Endothelial cell of umbilical vein (primary cell): ENCODE measurements at regions of chr17 and their contacts with region 1.

Region 1: GRCh38 chr17:64326395-64327054 is 63.5 kb upstream of the TEX2 start:
- DNase-seq: peak; percentile 77
- H3K4me3 ChIP-seq: no peak overlapping the region
- H3K27ac ChIP-seq: peak overlapping the region; percentile 95
- H3K4me1 ChIP-seq: peaks cover 57% of the 10 kb centered on the region
- H3K27me3 ChIP-seq: no peaks in the 10 kb centered on the region
- CTCF ChIP-seq: no peak
- POLR2A ChIP-seq: peak; percentile 45

Region 2: GRCh38 chr17:64145757-64146417 is 180.6 kb before region 1 on chr17:
- CTCF ChIA-PET with region 1: interaction called, 3 read pairs
- POLR2A ChIA-PET with region 1: interaction called, 12 read pairs
- dilution Hi-C with region 1: no loop called
- intact Hi-C with region 1: no loop called
- DNase-seq: peak; percentile 99
- H3K4me3 ChIP-seq: peak overlapping the region; percentile 31 to 72 (median 64)
- H3K27ac ChIP-seq: peak overlapping the region; percentile 63
- H3K4me1 ChIP-seq: peaks cover 21% of the 10 kb centered on the region
- H3K27me3 ChIP-seq: no peaks in the 10 kb centered on the region
- CTCF ChIP-seq: no peak
- POLR2A ChIP-seq: peak; percentile 100

Region 3: GRCh38 chr17:64343853-64344637 is 17.5 kb after region 1 on chr17:
- CTCF ChIA-PET with region 1: interaction called, 32 read pairs
- POLR2A ChIA-PET with region 1: interaction called, 6 read pairs
- dilution Hi-C with region 1: no loop called
- intact Hi-C with region 1: loop called (anchors 1 kb)
- DNase-seq: peak; percentile 99
- H3K4me3 ChIP-seq: no peak overlapping the region
- H3K27ac ChIP-seq: peak overlapping the region; percentile 89
- H3K4me1 ChIP-seq: peaks cover 41% of the 10 kb centered on the region
- H3K27me3 ChIP-seq: no peaks in the 10 kb centered on the region
- CTCF ChIP-seq: no peak
- POLR2A ChIP-seq: peak; percentile 38

Region 4: DNA sequence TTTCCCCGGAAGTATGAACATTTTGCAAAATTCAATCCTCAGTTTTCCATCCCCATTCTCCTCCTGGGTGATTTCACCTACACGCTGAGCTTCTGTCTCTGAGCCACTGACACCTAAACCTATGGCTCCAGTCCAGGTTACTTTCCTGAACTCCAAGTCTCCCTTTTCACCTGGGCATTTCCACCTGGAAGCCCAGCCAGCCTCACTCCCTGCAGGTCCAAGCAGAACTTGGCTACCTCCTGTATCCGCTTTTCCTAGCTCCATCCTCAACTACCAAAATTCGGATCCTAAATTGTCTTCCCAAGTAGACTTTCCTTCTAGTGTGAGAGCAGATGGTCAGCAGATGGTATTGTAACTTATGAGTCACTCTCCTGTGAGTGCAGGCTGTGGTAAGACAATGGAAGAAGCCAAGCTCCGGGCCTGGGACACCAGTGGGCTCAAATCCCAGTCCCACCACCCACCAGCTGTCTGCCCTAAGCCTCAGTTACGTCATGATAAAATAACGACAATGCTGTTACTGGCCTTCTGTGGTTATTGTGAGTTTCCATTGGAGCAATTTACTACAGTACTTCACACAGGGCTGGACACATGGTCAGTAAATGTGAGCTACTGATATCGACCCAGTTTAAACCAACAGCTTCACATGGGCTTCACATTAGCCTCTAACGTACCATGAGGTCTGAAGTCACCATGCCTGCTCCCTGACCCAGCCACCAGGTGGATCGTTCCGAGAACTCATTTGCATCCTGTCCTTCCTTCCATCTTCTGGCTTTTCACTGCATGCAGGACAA is 30.9 kb after region 1 on chr17:
- CTCF ChIA-PET with region 1: interaction called, 9 read pairs
- POLR2A ChIA-PET with region 1: interaction called, 10 read pairs
- dilution Hi-C with region 1: no loop called
- intact Hi-C with region 1: loop called (anchors 1 kb)
- DNase-seq: peak; percentile 91
- H3K4me3 ChIP-seq: no peak overlapping the region
- H3K27ac ChIP-seq: peak overlapping the region; percentile 38
- H3K4me1 ChIP-seq: peaks cover 60% of the 10 kb centered on the region
- H3K27me3 ChIP-seq: no peaks in the 10 kb centered on the region
- CTCF ChIP-seq: no peak
- POLR2A ChIP-seq: peak; percentile 45

Region 5: DNA sequence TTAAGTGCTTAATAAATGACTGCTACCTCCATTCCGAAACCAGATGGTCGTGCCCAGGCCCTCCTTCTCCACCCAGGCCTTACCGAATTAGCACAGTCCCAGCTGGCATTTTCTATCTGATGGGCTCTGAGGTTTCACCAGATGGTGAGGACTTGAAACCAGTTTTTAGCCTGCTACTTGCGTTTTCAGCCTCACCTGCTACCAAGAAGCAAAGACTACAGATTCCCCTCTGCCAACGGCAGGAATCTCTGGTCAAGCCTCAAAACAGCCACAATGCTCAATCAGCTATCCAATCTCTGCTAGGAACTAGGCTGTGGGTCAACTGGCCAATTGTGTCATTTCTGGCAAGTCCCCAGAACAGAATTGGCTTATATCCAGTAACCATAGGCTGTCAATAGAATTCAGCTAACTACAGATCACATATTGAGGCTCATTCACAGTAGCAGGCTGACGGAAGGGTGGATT is 52.4 kb after region 1 on chr17:
- CTCF ChIA-PET with region 1: interaction called, 15 read pairs
- POLR2A ChIA-PET with region 1: interaction called, 4 read pairs
- dilution Hi-C with region 1: no loop called
- intact Hi-C with region 1: loop called (anchors 5 kb)
- DNase-seq: peak; percentile 83
- H3K4me3 ChIP-seq: no peak overlapping the region
- H3K27ac ChIP-seq: peak overlapping the region; percentile 31
- H3K4me1 ChIP-seq: peaks cover 54% of the 10 kb centered on the region
- H3K27me3 ChIP-seq: no peaks in the 10 kb centered on the region
- CTCF ChIP-seq: no peak
- POLR2A ChIP-seq: peak; percentile 59

Region 6: DNA sequence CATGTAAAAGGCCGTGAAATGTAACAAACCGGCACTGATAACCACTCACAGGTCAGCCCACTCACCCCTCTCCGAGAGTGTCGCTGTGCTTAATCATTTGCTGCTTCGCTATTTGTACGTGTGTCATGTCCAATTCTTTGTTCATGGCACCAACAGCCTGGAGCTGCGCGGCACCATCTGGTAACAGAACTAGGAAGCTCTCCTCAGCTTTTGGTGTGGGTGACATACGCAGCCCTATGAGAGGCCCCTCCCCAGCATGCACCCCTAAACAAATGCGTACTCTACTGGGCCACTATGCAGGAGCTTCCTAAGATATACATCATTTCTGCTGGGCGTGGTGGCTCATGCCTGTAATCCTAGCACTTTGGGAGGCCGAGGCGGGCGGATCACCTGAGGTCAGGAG is 66.5 kb after region 1 on chr17:
- CTCF ChIA-PET with region 1: interaction called, 8 read pairs
- POLR2A ChIA-PET with region 1: no interaction called
- dilution Hi-C with region 1: loop called (anchors 10 kb)
- intact Hi-C with region 1: loop called (anchors 1 kb)
- DNase-seq: no peak
- H3K4me3 ChIP-seq: no peak overlapping the region
- H3K27ac ChIP-seq: no peak overlapping the region
- H3K4me1 ChIP-seq: peaks cover 16% of the 10 kb centered on the region
- H3K27me3 ChIP-seq: no peaks in the 10 kb centered on the region
- CTCF ChIP-seq: no peak
- POLR2A ChIP-seq: no peak

Region 7: GRCh38 chr17:64496786-64497564 is 170.4 kb after region 1 on chr17 and contains the start of gene POLG2:
- CTCF ChIA-PET with region 1: no interaction called
- POLR2A ChIA-PET with region 1: no interaction called
- dilution Hi-C with region 1: no loop called
- intact Hi-C with region 1: loop called (anchors 5 kb)
- DNase-seq: peak; percentile 95
- H3K4me3 ChIP-seq: peak within 1 kb of the TSS; percentile 33 to 75 (median 66)
- H3K27ac ChIP-seq: peak within 1 kb of the TSS; percentile 73
- H3K4me1 ChIP-seq: peaks cover 54% of the 10 kb centered on the region
- H3K27me3 ChIP-seq: no peaks in the 10 kb centered on the region
- CTCF ChIP-seq: peak; percentile 36 to 44
- POLR2A ChIP-seq: peak; percentile 97
- total RNA-seq, gene POLG2: 18.6 and 20.3 TPM in 2 replicates